ENCODE measurements at regions of chr10 and their contacts with region 1.

Region 1: DNA sequence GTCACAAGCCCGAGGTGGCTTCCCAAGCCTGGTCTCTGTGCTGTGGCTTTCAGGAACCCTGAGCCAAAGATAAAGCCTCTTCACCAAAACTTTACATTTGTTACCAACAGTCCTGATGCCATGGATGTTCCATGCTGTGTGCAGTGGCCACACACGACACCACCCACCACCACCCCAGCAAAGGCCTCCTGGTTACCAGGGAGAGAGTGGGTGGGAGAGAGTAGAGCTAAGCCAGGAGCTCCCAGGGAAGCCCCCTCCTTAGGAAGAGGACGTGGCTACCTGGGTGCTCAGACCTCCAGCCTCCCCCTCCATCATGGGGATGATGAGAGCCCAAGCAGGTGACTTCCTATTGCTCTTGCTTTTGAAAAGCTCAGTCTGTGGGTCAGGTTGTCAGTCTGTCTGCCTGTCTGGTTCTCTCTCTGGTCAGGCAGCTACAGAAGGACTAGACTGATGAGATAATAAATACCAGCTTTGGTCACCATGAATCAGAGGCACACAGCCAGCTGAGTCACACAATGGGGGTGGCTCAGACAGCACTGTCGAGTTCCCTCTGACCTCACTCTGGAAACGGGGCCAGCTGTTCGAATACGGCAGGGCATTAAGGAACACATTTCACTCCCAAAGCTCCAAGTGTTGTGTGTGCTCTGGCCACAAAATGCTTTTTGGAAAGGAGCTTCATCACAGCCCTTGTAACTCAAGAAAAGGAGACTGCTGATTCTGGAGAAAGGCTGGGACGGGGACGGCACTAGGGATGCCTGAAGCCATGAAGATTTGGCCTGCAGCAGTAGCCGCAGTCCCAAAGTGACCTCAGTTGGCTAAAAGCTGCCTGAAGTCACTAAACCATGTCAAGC is 166.0 kb downstream of the FANK1 start:
- DNase-seq: peak; percentile 73 to 86
- H3K4me3 ChIP-seq: no peak overlapping the region
- H3K27ac ChIP-seq: peak overlapping the region; percentile 90
- H3K4me1 ChIP-seq: peaks cover 59% of the 10 kb centered on the region
- H3K27me3 ChIP-seq: no peaks in the 10 kb centered on the region
- CTCF ChIP-seq: no peak

Region 2: GRCh38 chr10:125878957-125879835 is 183.2 kb before region 1 on chr10:
- CTCF ChIA-PET with region 1: no interaction called
- POLR2A ChIA-PET with region 1: no interaction called
- intact Hi-C with region 1: loop called (anchors 10 kb)
- DNase-seq: peak; percentile 53 to 89
- H3K4me3 ChIP-seq: no peak overlapping the region
- H3K27ac ChIP-seq: peak overlapping the region; percentile 76
- H3K4me1 ChIP-seq: peaks cover 12% of the 10 kb centered on the region
- H3K27me3 ChIP-seq: no peaks in the 10 kb centered on the region
- CTCF ChIP-seq: no peak

Region 3: DNA sequence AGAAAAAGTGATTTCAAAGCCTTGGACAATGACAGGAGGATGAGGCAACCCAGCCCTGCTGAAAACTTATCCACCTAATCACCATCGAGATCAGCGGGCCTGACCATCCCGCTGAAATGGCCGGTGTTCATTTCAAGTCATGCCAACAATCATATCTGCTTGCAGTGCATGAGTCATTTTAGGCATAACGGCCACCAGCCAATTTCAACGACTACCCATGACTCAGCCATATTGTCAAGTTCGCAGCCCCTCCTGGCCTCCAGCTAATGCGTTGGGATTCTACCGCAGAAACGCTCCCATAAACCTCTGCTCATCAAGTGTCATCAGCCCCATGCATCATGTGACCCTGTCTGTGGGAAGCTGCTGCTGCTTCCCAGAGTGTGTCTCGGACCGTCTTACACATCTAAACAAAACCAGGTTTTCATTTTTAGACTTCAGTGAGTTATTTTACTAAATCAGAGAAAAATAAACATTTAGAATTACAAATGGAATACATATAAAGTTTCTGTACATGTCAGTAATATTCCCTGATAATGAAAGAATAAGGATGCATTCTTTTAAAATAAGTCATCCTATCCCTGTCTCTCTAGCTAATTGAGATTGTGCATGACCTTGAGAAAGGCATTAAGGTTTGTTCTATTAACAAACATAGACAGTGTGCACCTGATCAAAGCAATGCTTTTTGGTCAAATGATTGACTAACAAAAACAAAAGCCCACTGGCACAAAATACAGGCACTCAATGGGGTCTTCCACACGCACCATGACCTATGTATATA is 137.1 kb after region 1 on chr10:
- CTCF ChIA-PET with region 1: no interaction called
- POLR2A ChIA-PET with region 1: interaction called, 5 read pairs
- intact Hi-C with region 1: loop called (anchors 1 kb)
- DNase-seq: peak; percentile 72 to 75
- H3K4me3 ChIP-seq: no peak overlapping the region
- H3K27ac ChIP-seq: peak overlapping the region; percentile 79
- H3K4me1 ChIP-seq: peaks cover 35% of the 10 kb centered on the region
- H3K27me3 ChIP-seq: no peaks in the 10 kb centered on the region
- CTCF ChIP-seq: no peak

Region 4: GRCh38 chr10:126247446-126247975 is 185.2 kb after region 1 on chr10:
- CTCF ChIA-PET with region 1: no interaction called
- POLR2A ChIA-PET with region 1: no interaction called
- intact Hi-C with region 1: loop called (anchors 1 kb)
- DNase-seq: peak; percentile 64 to 88
- H3K4me3 ChIP-seq: no peak overlapping the region
- H3K27ac ChIP-seq: peak overlapping the region; percentile 77
- H3K4me1 ChIP-seq: peaks cover 10% of the 10 kb centered on the region
- H3K27me3 ChIP-seq: no peaks in the 10 kb centered on the region
- CTCF ChIP-seq: no peak

Region 5: GRCh38 chr10:126252884-126253618 is 190.7 kb after region 1 on chr10:
- CTCF ChIA-PET with region 1: no interaction called
- POLR2A ChIA-PET with region 1: no interaction called
- intact Hi-C with region 1: loop called (anchors 1 kb)
- DNase-seq: peak in 1 of 2 experiments; percentile 42
- H3K4me3 ChIP-seq: no peak overlapping the region
- H3K27ac ChIP-seq: no peak overlapping the region
- H3K4me1 ChIP-seq: peaks cover 10% of the 10 kb centered on the region
- H3K27me3 ChIP-seq: no peaks in the 10 kb centered on the region
- CTCF ChIP-seq: no peak

Region 6: DNA sequence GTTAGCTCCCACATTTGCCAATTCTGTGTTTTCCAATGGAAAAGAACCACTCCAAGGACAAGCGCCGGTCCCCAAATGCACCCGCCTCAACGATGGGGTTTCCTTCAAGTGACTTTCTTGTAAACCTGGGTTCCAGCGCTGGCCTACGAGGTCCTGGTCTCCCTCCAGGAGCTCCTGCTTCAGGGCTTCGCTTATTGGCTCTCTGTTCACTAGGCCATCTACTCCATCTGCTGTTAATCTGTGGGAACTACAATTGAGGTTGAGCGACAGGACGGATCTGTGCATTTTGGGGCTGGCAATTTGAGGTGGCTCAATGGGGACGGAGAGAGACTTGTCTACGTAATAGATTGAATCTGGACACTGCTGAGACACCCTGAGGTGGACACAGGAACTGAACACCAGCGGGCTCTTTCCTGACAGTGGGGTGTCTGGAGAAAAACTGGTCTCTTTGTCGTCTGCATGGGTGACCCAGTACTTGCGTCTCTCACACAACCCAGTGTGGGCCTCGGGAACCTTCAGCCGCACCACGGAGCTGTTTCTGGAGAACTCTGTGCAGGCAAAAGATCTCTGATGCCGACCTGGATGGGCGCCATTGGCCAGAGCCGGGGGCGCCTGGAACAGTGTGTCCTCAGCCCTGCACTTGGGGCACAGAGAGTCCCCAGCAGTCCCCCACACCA is 441.8 kb after region 1 on chr10:
- CTCF ChIA-PET with region 1: no interaction called
- POLR2A ChIA-PET with region 1: no interaction called
- intact Hi-C with region 1: loop called (anchors 1 kb)
- DNase-seq: peak; percentile 23 to 44
- H3K4me3 ChIP-seq: no peak overlapping the region
- H3K27ac ChIP-seq: no peak overlapping the region
- H3K4me1 ChIP-seq: 0 out of 2 replicates have a peak, but pooled peaks cover 3% of the 10 kb centered on the region
- H3K27me3 ChIP-seq: no peaks in the 10 kb centered on the region
- CTCF ChIP-seq: peak; percentile 81

Region 7: GRCh38 chr10:126904819-126905686 is 842.7 kb after region 1 on chr10 and contains the start of gene DOCK1:
- CTCF ChIA-PET with region 1: no interaction called
- POLR2A ChIA-PET with region 1: no interaction called
- intact Hi-C with region 1: loop called (anchors 5 kb)
- DNase-seq: peak in 1 of 2 experiments; percentile 52
- H3K4me3 ChIP-seq: peak within 1 kb of the TSS; percentile 73
- H3K27ac ChIP-seq: no peak within 1 kb of the TSS
- H3K4me1 ChIP-seq: peaks cover 27% of the 10 kb centered on the region
- H3K27me3 ChIP-seq: no peaks in the 10 kb centered on the region
- CTCF ChIP-seq: no peak
- total RNA-seq, gene DOCK1: 21.4 and 24.8 TPM in 2 replicates

Measured in PC-9 (cell line).